ENCODE measurements at regions of chr2 and their contacts with region 1.

Region 1: GRCh38 chr2:181934694-181935093 is 43.2 kb downstream of the ITPRID2 start:
- DNase-seq: no peak
- H3K4me3 ChIP-seq: no peak overlapping the region
- H3K27ac ChIP-seq: no peak overlapping the region
- H3K4me1 ChIP-seq: no peaks in the 10 kb centered on the region
- H3K27me3 ChIP-seq: no peaks in the 10 kb centered on the region
- CTCF ChIP-seq: no peak

Region 2: DNA sequence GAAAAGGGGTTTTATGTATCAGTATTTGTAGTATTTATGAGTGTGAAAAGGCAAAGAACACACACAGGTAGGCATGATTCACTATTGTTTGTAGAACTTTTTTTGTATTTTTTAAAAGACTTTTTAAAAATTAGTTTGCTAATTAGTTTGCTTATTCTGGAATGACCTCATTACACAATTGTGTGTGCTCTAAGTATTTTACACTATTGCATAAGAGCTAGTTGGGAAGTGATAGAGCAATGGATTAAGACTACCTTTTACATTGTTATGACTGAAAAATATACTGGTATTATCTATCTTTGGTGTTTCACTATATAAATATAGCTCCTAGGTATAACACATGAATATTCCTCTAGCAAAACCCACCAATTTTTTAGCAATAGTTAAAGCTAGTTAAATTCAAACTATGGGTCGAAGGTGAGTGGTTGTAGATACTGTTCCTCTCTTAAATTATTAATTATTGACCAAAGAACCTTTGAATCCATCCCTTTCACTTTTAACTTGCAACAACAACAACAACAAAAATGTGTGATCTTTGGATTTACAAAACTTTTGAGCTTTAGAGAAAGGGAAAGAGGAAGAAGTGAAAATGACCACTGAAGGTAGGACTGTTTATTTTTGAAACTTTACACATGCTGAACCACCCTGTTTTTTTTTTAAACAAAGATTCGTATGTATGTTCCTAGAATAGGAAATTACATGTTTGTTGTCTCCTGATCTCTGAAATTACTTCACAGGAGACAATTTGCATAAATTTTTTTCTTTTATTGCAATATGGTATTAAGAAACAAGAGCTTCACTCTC is 24.5 kb before region 1 on chr2:
- CTCF ChIA-PET with region 1: no interaction called
- POLR2A ChIA-PET with region 1: no interaction called
- intact Hi-C with region 1: loop called (anchors 2 kb)
- DNase-seq: no peak
- H3K4me3 ChIP-seq: no peak overlapping the region
- H3K27ac ChIP-seq: no peak overlapping the region
- H3K4me1 ChIP-seq: no peaks in the 10 kb centered on the region
- H3K27me3 ChIP-seq: no peaks in the 10 kb centered on the region
- CTCF ChIP-seq: no peak